Aorta (tissue), 5 donors: ENCODE measurements at regions of chr2 and their contacts with region 1.

Region 1: DNA sequence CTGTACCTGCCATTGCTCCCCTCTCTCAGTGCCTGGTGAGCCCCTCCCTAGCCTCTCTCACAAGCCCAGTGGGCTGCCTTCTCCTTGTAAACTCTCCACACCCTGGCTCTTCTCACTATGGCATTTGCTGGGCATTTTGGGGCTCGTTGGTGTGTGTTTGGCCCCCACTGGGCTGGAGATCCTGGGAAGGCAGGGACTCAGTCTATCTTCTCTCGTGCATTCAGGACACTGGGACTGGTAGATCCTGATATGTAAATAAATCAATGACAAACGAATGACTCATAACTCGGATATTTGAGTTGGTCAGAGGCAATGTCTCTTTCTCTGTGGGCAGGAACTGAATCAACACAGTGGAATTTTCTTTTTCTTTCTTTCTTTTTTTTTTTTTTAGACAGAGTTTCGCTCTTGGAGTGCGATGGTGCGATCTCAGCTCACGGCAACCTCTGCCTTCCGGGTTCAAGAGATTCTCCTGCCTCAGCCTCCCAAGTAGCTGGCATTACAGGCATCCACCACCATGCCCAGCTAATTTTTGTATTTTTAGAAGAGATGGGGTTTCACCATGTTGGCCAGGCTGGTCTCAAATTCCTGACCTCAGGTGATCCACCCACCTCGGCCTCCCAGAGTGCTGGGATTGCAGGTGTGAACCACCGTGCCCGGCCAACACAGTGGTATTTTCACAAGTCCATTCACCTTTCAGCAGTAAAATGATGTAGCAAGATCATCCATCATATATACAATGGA is 144.6 kb upstream of the SPRED2 start:
- DNase-seq: no peak
- ATAC-seq: peak; percentile 62
- H3K4me3 ChIP-seq: no peak overlapping the region
- H3K27ac ChIP-seq: peak overlapping the region; percentile 72 to 96
- H3K4me1 ChIP-seq: peaks cover 0 to 2% of the 10 kb centered on the region in 2 donors
- H3K27me3 ChIP-seq: no peaks in the 10 kb centered on the region

Region 2: GRCh38 chr2:64914735-64915509 is 662.1 kb before region 1 on chr2:
- intact Hi-C with region 1: loop called in 1 of 2 experiments (anchors 5 kb)
- DNase-seq: no peak
- ATAC-seq: no peak
- H3K4me3 ChIP-seq: no peak overlapping the region
- H3K27ac ChIP-seq: no peak overlapping the region
- H3K4me1 ChIP-seq: no peaks in the 10 kb centered on the region
- H3K27me3 ChIP-seq: no peaks in the 10 kb centered on the region

Region 3: GRCh38 chr2:65064728-65065552 is 512.1 kb before region 1 on chr2:
- intact Hi-C with region 1: loop called in 1 of 2 experiments (anchors 10 kb)
- DNase-seq: peak; percentile 82 to 83
- ATAC-seq: peak; percentile 84
- H3K4me3 ChIP-seq: no peak overlapping the region
- H3K27ac ChIP-seq: peak overlapping the region in 1 of 2 donors; percentile 12
- H3K4me1 ChIP-seq: peaks cover 0 to 2% of the 10 kb centered on the region in 2 donors
- H3K27me3 ChIP-seq: no peaks in the 10 kb centered on the region

Region 4: GRCh38 chr2:65264821-65265670 is 312.0 kb before region 1 on chr2:
- intact Hi-C with region 1: loop called in 1 of 2 experiments (anchors 5 kb)
- DNase-seq: no peak
- ATAC-seq: peak; percentile 68
- H3K4me3 ChIP-seq: no peak overlapping the region
- H3K27ac ChIP-seq: no peak overlapping the region
- H3K4me1 ChIP-seq: no peaks in the 10 kb centered on the region
- H3K27me3 ChIP-seq: no peaks in the 10 kb centered on the region